Kidney (tissue), 22 donors: ENCODE measurements at regions of chr6 and their contacts with region 1.

Region 1: GRCh38 chr6:131923356-131923755 is 27.8 kb downstream of the CCN2 start:
- DNase-seq: peak in 4 of 5 donors; percentile 49 to 71 (median 56)
- H3K4me3 ChIP-seq: no peak overlapping the region
- H3K27ac ChIP-seq: no peak overlapping the region
- H3K4me1 ChIP-seq: no peaks in the 10 kb centered on the region
- H3K27me3 ChIP-seq: no peaks in the 10 kb centered on the region
- CTCF ChIP-seq: peak; percentile 81

Region 2: DNA sequence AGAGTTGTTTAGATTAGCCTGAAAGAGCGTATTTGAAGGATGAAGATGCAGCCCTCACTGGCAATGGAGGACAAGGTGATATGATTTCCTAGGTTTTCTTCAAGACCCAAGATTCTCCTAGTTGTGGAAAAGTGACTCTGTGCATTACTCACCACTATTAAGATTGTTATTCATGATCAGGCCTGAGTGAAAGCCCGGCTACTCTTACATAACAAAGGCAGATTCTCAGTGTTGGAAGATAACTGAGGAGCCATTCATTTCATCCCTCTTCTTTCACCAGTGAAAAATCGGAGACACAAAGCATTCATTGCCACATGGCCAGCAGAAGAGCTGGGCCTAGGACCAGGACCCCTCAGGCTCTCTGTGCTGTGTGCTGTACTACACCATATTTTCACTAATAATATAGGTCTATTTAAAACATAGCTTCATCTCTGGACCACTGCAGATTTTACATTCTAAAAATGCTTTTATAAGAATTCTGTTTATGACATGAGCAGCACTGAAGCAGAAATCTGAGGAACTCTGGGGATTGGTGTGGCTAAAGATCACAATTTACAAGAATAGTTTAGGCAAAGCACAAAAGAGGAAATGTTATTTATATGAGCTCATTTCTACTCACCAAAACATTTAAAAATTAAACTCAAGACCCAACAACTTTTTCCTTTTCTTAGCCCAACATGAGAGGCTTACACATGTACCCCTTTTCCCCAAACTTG is 209.7 kb after region 1 on chr6:
- intact Hi-C with region 1: no loop called
- DNase-seq: peak in 1 of 5 donors; percentile 2
- H3K4me3 ChIP-seq: no peak overlapping the region
- H3K27ac ChIP-seq: peak overlapping the region; percentile 9 to 55
- H3K4me1 ChIP-seq: peaks cover 0 to 2% (median 0%) of the 10 kb centered on the region in 3 donors
- H3K27me3 ChIP-seq: no peaks in the 10 kb centered on the region
- CTCF ChIP-seq: no peak

Region 3: GRCh38 chr6:132218059-132218696 is 294.8 kb after region 1 on chr6:
- intact Hi-C with region 1: loop called (anchors 10 kb)
- DNase-seq: peak in 2 of 5 donors; percentile 19 to 55
- H3K4me3 ChIP-seq: no peak overlapping the region
- H3K27ac ChIP-seq: no peak overlapping the region
- H3K4me1 ChIP-seq: no peaks in the 10 kb centered on the region
- H3K27me3 ChIP-seq: no peaks in the 10 kb centered on the region
- CTCF ChIP-seq: peak; percentile 20

Region 4: GRCh38 chr6:132788658-132789395 is 865.5 kb after region 1 on chr6:
- intact Hi-C with region 1: no loop called
- DNase-seq: no peak
- H3K4me3 ChIP-seq: no peak overlapping the region
- H3K27ac ChIP-seq: no peak overlapping the region
- H3K4me1 ChIP-seq: no peaks in the 10 kb centered on the region
- H3K27me3 ChIP-seq: no peaks in the 10 kb centered on the region
- CTCF ChIP-seq: no peak